Posterior cingulate gyrus (tissue), 11 donors: ENCODE measurements at regions of chr11 and their contacts with region 1.

Region 1: DNA sequence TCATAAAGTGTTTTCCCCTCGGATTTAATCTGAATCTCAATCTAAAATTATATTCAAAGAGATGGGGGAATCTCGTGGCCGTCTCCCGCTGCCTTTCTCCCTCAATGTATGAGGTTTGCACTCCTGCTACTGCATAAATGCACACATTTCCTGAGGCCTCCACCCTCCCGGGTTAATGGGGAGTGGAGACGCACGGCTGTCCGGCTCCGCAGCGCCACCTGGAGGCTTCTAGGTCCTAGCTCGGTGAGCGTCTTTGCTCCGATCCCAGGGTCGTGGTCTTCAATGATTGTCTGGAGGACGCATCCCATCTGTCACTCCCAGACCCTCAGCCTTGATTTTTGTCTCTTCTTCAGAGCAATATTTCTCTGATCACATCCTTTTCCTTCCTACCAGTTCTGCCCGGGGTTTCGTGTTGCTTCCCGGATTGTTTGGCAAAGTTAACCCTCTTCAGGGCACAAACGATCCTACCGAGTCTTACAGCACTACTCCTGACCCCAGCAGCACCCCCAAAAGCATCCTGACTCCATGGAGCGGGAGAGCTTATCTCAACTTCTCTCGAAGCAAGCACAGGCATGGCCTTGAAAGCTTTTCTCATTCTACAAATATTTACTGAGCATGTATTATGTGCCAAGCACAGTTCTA is at the start of gene LMO1:
- DNase-seq: peak; percentile 58 to 97 (median 87)

Region 2: DNA sequence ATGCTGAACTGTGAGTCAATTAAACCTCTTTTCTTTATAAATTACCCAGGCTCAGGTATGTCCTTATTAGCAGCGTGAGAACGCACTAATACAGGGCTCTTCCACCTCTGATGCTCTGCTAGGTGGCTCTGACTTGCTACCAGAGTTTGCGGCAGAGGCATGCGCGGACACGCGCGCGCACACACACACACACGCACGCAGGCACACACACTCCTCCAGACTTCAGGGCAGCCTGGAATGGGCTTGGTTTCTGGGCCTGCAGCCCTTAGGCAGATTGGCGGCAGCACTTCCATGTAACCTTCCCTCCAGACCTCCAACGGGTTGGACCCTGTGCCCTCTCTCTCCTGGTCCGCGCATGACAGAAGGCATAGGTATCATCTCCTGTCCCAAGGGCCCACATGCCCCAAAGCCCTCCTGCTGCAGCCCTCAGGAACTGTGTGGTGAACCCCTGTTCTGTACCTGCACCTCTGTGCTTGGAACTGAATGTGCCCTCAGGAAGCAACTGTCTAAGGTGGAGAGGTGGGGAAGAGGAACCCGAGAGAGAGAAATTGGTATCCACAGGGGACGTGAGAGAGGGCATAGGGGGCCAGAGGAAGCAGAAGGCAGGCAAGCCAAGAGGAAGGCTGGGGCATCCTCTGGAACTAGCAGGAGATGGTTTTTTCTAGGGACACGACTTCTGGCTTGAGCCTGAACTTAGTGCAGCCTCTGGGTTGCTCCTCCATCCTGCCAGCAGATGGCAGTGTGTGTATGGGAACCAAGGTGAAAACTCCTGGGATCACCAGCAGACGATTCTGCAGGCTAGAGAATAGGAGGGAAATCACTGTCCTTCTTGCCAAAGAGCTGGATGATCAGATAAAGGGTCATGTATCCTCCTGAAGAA is 71.6 kb before region 1 on chr11:
- intact Hi-C with region 1: loop called (anchors 2 kb)
- DNase-seq: peak; percentile 47 to 95 (median 80)

Region 3: DNA sequence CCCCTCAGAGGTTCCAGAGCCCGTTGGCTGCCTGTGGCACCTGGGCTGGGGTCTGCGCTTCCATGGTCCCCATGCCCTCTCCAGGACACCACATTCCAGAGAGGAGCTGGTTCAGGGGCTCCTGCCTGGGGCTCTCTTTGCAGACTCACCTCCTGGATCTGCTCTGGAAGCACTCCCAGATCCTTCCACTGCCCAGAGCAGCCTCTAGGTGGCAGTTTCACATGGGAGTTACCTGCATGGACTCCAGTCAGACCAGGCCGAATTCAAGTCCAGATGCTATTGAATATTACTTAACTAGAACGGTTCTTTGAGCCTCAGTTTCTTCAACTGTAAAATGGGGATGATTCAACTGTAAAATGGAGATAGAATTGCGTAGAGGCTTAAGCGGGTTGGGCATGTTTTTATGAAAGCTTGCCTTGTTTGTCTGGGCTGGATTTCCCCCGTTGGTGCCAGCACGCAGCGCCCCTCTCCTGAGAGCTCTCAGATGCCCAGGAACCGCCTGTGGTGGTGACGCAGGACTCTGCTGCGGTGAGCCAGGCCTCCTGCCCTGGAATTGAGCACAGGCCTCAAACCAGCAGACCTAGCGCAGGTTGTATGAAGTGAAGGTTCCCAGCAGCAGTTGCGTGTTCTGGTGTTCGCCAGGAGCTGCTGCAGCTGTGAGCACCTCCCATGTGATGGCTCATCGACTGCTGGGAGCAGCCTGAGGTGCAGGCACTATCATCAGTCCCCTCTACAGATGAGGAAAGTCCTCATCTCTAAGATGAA is 44.5 kb before region 1 on chr11:
- intact Hi-C with region 1: no loop called
- DNase-seq: peak in 6 of 10 donors; percentile 36 to 93 (median 53)